ENCODE measurements at regions of chr19 and their contacts with region 1.

Region 1: DNA sequence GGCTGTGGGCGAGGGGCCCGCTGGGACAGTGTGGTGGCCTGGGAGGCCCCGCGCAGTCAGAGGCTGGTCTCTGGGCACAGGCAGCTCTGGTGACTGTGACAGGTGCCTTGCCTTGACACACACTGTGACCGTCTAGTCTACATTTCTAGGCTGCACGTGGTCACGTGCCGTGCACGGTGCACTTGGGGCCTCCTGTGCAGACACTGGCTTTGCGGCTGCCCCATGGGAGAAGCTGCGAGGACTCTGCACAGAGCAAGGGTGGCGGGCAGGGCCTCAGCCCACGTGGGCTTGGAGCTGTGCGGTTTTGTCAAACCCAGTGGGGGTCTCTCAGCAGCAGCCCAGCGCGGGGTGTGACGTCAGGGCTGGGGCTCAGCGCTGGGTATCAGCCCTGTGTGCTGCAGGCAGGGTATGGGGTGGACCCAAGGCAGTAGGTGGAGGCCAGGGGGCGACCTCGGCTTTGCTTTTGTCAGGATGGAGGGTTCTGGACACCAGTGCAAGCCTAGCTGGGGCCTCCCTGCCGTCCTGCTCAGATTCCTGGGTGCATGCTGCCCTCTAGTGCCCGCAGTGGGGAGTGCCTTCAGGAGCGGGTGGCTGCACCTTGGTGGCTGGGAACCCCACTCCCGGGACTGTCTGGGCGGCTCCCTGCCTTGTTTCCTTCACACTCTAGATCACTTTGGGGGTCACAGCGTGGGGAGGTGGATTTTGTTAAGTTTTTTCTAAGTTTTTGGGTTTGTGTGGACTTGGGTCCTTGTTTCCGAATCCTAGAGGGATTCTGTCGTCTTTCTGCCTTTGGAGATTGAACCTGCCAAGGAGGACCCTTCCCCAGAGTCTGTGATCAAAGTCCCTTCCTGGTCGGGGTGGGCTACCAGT is 62.6 kb downstream of the KDM4B start:
- DNase-seq: no peak
- H3K4me3 ChIP-seq: no peak overlapping the region
- H3K27me3 ChIP-seq: no peaks in the 10 kb centered on the region
- CTCF ChIP-seq: peak; percentile 96

Region 2: GRCh38 chr19:4815426-4816201 is 215.9 kb before region 1 on chr19:
- CTCF ChIA-PET with region 1: interaction called, 50 read pairs
- POLR2A ChIA-PET with region 1: no interaction called
- DNase-seq: no peak
- H3K4me3 ChIP-seq: no peak overlapping the region
- H3K27me3 ChIP-seq: no peaks in the 10 kb centered on the region
- CTCF ChIP-seq: no peak

Region 3: DNA sequence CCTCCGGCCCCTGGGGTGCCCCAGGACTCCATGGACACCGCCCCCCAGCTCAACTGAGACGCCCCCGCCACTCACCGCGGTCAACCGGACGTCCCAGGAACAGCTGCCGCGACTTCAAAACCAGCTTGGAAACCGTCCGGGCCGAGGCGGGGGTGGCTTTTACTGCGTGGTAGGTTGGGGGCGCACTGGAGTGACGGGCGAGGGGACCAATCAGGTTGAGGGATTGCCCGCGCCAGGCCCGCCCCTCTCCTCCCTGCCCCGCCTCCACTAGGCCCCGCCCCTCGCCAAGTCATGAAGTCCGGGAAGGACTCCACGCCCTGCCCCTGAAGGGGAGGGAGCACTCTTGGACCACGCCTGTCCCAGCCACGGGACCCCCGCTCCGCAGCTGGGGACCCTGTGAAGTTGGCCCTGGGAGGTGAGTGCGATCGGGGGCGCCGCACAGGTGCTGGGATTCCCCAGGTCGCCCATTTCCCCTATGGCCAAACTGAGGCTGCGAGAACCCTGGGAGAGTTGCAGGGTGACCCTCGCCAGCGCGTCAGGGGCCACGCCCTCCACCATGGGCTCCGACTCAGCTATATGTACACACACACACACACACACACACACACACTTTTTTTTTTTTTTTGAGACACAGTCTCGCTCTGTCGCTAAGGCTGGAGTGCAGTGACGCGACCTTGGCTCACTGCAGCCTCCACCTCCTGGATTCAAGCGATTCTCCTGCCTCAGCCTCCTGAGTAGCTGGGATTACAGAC is 163.8 kb before region 1 on chr19 and contains the start of gene PLIN3:
- CTCF ChIA-PET with region 1: interaction called, 42 read pairs
- POLR2A ChIA-PET with region 1: interaction called, 3 read pairs
- DNase-seq: peak; percentile 67
- H3K4me3 ChIP-seq: peak within 1 kb of the TSS; percentile 92
- H3K27me3 ChIP-seq: no peaks in the 10 kb centered on the region
- CTCF ChIP-seq: no peak
- polyA plus RNA-seq, gene PLIN3: 128 and 211 TPM in 2 replicates

Region 4: GRCh38 chr19:4969772-4970531 is 61.5 kb before region 1 on chr19:
- CTCF ChIA-PET with region 1: interaction called, 27 read pairs
- POLR2A ChIA-PET with region 1: no interaction called
- DNase-seq: no peak
- H3K4me3 ChIP-seq: peak overlapping the region; percentile 83
- H3K27me3 ChIP-seq: no peaks in the 10 kb centered on the region
- CTCF ChIP-seq: no peak

Region 5: GRCh38 chr19:4980067-4980466 is 51.4 kb before region 1 on chr19:
- CTCF ChIA-PET with region 1: interaction called, 12 read pairs
- POLR2A ChIA-PET with region 1: no interaction called
- DNase-seq: no peak
- H3K4me3 ChIP-seq: no peak overlapping the region
- H3K27me3 ChIP-seq: no peaks in the 10 kb centered on the region
- CTCF ChIP-seq: no peak

Region 6: GRCh38 chr19:4988770-4989251 is 42.7 kb before region 1 on chr19:
- CTCF ChIA-PET with region 1: interaction called, 12 read pairs
- POLR2A ChIA-PET with region 1: no interaction called
- DNase-seq: peak; percentile 53
- H3K4me3 ChIP-seq: no peak overlapping the region
- H3K27me3 ChIP-seq: no peaks in the 10 kb centered on the region
- CTCF ChIP-seq: no peak

Region 7: GRCh38 chr19:5001615-5002014 is 29.9 kb before region 1 on chr19:
- CTCF ChIA-PET with region 1: interaction called, 17 read pairs
- POLR2A ChIA-PET with region 1: no interaction called
- DNase-seq: peak; percentile 34
- H3K4me3 ChIP-seq: no peak overlapping the region
- H3K27me3 ChIP-seq: no peaks in the 10 kb centered on the region
- CTCF ChIP-seq: peak; percentile 86

Region 8: GRCh38 chr19:5057861-5058260 is 26.4 kb after region 1 on chr19:
- CTCF ChIA-PET with region 1: no interaction called
- POLR2A ChIA-PET with region 1: no interaction called
- DNase-seq: no peak
- H3K4me3 ChIP-seq: no peak overlapping the region
- H3K27me3 ChIP-seq: no peaks in the 10 kb centered on the region
- CTCF ChIP-seq: no peak

Region 9: DNA sequence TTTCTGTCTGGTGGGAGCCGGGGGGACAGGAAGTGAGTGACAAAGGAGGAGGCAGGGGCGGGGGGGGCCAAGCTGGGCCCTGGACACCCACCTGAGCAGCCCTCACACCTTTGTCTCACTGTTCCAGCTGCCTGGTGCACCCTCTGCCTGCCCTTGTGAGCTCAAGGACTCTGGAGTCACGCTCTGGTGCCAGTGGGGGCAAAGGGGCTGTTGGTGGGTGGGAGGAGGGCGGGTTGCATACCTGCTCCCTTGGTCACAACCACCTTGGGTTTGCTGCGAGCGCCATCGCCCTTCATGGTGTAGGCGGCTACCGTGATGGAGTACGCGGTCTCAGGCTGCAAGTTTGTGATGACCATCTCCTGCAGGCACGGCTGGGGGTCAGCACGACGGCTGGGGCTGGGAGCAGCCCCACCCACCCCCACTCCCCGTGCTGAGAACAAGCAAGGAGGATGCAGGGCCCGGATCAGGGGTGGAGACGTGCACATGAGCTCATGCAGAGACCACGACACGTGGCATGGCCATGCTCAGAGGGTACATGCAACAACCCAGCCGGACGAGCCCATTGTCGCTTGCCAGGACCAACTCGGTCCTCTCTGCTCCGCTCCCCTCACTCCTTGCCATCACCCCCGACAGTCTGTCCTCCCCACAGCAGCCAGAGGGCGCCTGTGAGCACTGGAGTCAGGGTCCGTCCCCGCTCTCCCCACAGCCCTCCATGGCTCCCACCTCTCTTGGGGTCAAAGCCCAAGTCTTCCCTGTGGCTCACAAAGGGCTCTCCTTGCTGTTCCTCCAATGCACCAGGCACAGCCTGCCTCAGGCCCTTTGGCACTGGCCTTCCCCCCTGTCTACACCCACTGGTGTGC is 194.2 kb after region 1 on chr19:
- CTCF ChIA-PET with region 1: no interaction called
- POLR2A ChIA-PET with region 1: no interaction called
- DNase-seq: no peak
- H3K4me3 ChIP-seq: no peak overlapping the region
- H3K27me3 ChIP-seq: no peaks in the 10 kb centered on the region
- CTCF ChIP-seq: peak; percentile 56